OCI-LY7 (cell line): ENCODE measurements at regions of chr19 and their contacts with region 1.

Region 1: GRCh38 chr19:54937926-54938325 is 9.4 kb downstream of the NLRP7 start:
- DNase-seq: peak; percentile 84
- H3K4me3 ChIP-seq: peak overlapping the region; percentile 61
- H3K27ac ChIP-seq: peak overlapping the region; percentile 55
- H3K4me1 ChIP-seq: peaks cover 52% of the 10 kb centered on the region
- CTCF ChIP-seq: no peak

Region 2: DNA sequence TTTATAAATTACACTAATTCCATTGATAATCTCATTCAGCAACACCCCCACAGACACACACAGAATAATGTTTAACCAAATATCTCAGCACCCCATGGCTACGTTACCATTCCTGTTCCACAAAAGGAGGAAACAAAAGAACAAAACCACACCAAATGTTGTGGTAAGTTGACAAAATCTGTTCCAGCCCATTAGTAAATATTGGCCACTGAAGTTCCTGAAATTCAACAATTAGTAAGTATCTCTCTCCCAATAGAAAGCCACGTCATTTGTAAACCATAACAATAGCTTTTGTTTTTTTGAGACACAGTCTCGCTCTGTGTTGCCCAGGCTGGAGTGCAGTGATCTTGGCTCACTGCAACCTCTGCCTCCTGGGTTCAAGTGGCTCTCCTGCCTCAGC is 66.2 kb before region 1 on chr19:
- CTCF ChIA-PET with region 1: no interaction called
- POLR2A ChIA-PET with region 1: no interaction called
- intact Hi-C with region 1: no loop called
- DNase-seq: no peak
- H3K4me3 ChIP-seq: no peak overlapping the region
- H3K27ac ChIP-seq: no peak overlapping the region
- H3K4me1 ChIP-seq: peaks cover 12% of the 10 kb centered on the region
- CTCF ChIP-seq: no peak

Region 3: DNA sequence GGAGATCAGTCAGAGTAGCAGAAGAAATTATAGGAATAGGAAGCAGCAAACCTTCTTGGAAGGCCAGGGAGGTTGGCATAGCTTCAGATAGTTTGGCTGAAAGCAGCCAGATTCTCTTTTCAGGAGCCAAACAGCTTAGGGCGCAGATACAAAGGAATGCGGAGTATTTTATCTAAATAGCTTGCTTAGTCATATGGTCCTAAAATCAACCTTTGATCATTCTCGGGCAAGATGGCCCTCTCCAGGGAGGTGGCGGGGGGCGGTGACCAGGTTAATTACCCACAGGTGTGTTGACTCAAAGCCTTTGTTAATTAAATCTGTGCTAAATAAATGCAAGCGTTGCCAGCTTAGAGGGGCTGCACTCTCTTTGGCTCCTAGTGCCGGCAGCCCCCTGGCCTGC is 44.5 kb before region 1 on chr19:
- CTCF ChIA-PET with region 1: no interaction called
- POLR2A ChIA-PET with region 1: no interaction called
- intact Hi-C with region 1: no loop called
- DNase-seq: no peak
- H3K4me3 ChIP-seq: no peak overlapping the region
- H3K27ac ChIP-seq: no peak overlapping the region
- H3K4me1 ChIP-seq: no peaks in the 10 kb centered on the region
- CTCF ChIP-seq: no peak

Region 4: DNA sequence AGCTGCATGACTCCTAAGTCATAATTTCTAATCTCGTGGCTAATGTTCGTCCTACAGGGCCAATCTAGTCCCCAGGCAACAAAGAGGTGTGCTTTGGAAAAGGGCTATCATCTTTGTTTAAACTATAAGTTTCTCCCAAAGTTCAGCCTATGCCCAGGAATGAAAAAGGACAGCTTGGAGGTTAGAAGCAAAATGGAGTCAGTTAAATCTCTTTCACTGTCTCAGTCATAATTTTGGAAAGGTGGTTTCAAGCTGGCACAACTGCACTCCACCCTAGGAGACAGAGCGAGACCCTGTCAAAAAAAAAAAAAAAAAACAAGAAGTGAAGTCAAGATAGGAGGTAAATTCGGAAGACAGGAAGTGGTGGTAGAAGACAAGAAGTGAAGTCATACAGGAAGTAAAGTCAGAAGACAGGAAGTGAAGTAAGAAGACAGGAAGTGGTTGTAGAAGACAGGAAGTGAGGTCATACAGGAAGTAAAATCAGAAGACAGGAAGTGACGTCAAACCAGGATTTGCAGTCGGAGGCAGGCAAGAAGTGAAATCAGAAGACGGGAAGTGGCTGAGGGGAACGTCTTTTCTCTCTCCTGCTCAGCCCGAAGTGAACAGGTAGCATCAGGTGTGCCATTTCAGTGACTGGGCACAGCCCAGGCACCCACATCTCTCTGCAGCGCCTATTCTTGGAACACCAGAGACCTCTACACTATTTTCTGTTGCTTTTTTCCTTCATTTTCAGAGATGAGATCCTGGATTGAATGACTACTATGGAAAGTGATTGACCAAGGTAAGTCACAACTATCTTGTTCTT is 68.0 kb after region 1 on chr19:
- CTCF ChIA-PET with region 1: no interaction called
- POLR2A ChIA-PET with region 1: no interaction called
- intact Hi-C with region 1: loop called (anchors 5 kb)
- DNase-seq: peak; percentile 96
- H3K4me3 ChIP-seq: peak overlapping the region; percentile 75
- H3K27ac ChIP-seq: peak overlapping the region; percentile 56
- H3K4me1 ChIP-seq: peaks cover 12% of the 10 kb centered on the region
- CTCF ChIP-seq: no peak

Region 5: DNA sequence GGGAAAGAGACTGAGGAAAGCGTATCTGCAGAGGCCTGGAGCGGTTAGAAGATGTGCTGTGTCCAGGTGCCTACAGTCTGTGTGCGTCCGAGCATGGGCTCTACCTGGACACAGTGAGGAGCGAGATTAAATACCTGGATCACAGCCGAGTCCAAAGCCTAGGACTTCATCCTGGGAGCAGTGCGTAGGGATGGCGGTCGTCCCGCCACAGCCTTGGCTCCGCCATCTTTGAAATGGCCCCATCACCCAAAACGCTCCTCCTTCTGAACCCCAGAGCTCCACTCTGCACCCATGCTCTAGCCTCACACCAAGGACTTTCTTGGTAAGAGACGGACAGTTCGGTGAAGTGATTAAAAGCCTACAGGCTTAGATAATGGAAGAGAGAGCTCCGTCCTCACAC is 80.3 kb after region 1 on chr19:
- CTCF ChIA-PET with region 1: no interaction called
- POLR2A ChIA-PET with region 1: no interaction called
- intact Hi-C with region 1: no loop called
- DNase-seq: no peak
- H3K4me3 ChIP-seq: no peak overlapping the region
- H3K27ac ChIP-seq: no peak overlapping the region
- H3K4me1 ChIP-seq: no peaks in the 10 kb centered on the region
- CTCF ChIP-seq: no peak